CD4-positive, alpha-beta T cell (primary cell): ENCODE measurements at regions of chr2 and their contacts with region 1.

Region 1: DNA sequence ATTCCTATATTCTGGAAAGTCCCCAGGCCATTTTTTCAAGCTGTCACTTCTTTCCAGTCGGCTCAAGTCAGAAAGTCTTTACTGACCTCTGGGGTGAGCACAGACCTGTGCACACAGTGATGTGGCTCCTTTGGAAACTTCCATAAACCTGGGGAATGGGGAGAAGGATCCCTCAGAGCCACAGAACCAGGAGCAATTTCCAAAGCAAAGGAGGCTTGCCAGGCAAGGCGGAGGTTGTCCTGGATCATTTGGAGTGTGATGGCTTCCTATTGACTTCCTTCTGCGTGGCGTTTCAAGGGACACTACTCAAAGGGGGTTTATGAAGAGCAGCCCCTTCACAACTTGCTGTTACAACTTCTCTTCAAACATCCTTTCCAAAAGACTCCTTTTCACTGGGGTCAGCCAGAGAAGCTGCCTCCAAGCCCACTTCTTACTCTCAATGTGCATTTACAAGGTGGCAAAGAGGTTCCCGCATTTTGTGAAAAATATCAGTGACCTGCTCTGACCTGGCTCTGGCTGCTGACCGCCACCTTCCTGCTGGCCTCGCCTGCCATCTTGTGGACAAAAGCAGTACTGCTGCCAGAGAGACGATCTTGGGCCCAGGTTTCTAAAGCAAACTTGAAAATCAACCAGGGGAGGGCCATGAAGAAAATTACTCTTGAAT is 18.2 kb upstream of the TMEM247 start:
- DNase-seq: peak; percentile 41 to 83 (median 68)
- ATAC-seq: peak; percentile 60
- H3K4me3 ChIP-seq: no peak overlapping the region
- H3K4me3 Mint-ChIP-seq: no peak overlapping the region
- H3K27ac ChIP-seq: no peak overlapping the region
- H3K27ac Mint-ChIP-seq: no peak overlapping the region
- H3K4me1 ChIP-seq: peaks cover 12% of the 10 kb centered on the region
- H3K4me1 Mint-ChIP-seq: peaks cover 10% of the 10 kb centered on the region
- H3K27me3 ChIP-seq: no peaks in the 10 kb centered on the region
- H3K27me3 Mint-ChIP-seq: peaks cover 5% of the 10 kb centered on the region
- CTCF ChIP-seq: peak; percentile 100

Region 2: DNA sequence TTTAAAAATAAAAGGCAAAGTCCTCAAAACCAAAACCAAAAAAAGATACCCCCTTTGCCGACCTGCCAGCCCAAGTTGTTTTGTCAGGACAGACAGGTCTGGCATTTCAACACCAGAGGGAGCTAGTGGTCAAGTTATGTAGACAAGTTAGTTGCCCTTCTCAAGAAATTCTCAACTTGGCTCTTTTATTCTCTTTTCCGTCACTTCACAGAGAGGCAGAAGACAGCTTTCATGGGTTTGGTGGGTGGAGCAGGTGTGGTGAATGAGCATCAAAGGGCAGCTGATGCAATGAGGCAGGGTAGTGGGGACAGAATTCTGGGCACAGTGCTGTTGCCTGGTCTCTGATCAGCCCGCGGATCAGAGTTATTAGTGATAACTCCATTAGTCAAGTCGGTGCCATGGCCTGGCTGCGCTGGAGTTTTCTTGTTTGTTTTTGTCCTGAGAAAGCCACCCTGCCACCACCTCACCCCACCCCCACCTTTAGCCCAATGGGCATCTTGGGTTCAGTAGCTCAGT is 467.6 kb before region 1 on chr2:
- CTCF ChIA-PET with region 1: interaction called, 6 read pairs
- POLR2A ChIA-PET with region 1: interaction called, 3 read pairs
- intact Hi-C with region 1: loop called (anchors 1 kb)
- DNase-seq: peak in 13 of 14 experiments; percentile 8 to 80 (median 42)
- ATAC-seq: peak; percentile 68
- H3K4me3 ChIP-seq: no peak overlapping the region
- H3K4me3 Mint-ChIP-seq: no peak overlapping the region
- H3K27ac ChIP-seq: no peak overlapping the region
- H3K27ac Mint-ChIP-seq: no peak overlapping the region
- H3K4me1 ChIP-seq: no peaks in the 10 kb centered on the region
- H3K4me1 Mint-ChIP-seq: peaks cover 6% of the 10 kb centered on the region
- H3K27me3 ChIP-seq: no peaks in the 10 kb centered on the region
- H3K27me3 Mint-ChIP-seq: no peaks in the 10 kb centered on the region
- CTCF ChIP-seq: peak; percentile 80

Region 3: DNA sequence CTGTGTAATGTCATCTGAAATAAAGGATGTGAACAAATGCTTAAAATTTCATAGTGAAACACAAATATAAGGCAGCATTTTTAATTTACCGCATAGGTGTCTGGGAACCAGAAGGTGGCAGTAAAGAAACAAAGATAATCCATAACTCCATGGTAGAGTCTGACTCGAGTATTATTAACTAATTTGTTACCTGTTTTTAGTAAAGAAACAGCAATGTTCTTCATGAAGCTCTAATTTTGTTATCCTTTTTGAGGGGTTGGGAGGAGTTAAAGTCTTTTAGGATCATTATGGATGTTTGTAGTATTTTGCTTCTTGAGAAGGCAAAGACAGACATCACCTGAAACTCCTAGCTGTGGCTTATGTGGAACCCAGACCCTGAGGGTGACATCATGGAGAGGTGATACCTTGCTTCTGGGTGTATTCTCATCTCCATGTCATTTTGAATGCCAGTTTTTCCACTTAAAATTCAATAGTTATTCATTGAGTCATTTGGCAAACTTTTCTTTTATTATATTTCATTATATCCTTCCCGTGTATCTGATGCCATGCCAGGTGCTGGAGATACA is 450.1 kb before region 1 on chr2:
- CTCF ChIA-PET with region 1: no interaction called
- POLR2A ChIA-PET with region 1: no interaction called
- intact Hi-C with region 1: loop called (anchors 1 kb)
- DNase-seq: peak in 3 of 14 experiments; percentile 36 to 45 (median 36)
- ATAC-seq: no peak
- H3K4me3 ChIP-seq: no peak overlapping the region
- H3K4me3 Mint-ChIP-seq: no peak overlapping the region
- H3K27ac ChIP-seq: no peak overlapping the region
- H3K27ac Mint-ChIP-seq: no peak overlapping the region
- H3K4me1 ChIP-seq: no peaks in the 10 kb centered on the region
- H3K4me1 Mint-ChIP-seq: peaks cover 4% of the 10 kb centered on the region
- H3K27me3 ChIP-seq: no peaks in the 10 kb centered on the region
- H3K27me3 Mint-ChIP-seq: no peaks in the 10 kb centered on the region
- CTCF ChIP-seq: peak; percentile 57

Region 4: DNA sequence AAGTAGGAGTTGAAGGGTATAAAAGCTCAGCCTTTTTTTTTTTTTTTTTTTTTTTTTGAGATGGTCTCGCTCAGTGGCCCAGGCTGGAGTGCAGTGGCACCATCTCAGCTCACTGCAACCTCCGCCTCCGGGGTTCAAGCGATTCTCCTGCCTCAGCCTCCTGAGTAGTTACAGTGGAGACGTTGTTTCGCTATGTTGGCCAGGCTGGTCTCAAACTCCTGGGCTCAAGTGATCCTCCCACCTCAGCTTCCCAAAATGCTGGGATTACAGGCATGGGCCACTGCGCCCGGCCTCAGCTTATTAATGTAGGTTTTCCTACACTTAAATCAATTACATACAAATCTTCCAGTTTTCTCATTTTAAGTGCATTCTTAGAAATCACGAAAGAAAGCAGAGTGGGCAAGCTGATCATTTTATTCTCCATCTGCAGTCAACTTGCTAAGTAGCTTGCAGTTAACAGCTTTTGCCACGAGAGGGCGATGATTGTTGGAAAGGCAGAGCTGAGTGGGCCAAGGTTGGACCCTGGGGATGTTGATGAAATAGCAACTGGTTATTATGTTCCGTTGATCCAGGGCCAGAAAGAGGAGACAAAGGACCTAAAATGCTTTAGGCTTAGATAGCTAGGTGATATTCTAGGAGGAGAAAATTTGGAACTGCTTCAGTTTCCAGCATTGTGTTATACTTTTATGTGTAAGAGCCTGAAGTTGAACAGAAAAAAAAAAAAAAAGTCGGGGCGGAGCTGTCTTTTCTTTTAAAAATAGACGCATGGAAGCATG is 398.3 kb before region 1 on chr2:
- CTCF ChIA-PET with region 1: interaction called, 3 read pairs
- POLR2A ChIA-PET with region 1: no interaction called
- intact Hi-C with region 1: loop called (anchors 1 kb)
- DNase-seq: peak; percentile 41 to 74 (median 57)
- ATAC-seq: peak; percentile 52
- H3K4me3 ChIP-seq: no peak overlapping the region
- H3K4me3 Mint-ChIP-seq: no peak overlapping the region
- H3K27ac ChIP-seq: no peak overlapping the region
- H3K27ac Mint-ChIP-seq: no peak overlapping the region
- H3K4me1 ChIP-seq: no peaks in the 10 kb centered on the region
- H3K4me1 Mint-ChIP-seq: no peaks in the 10 kb centered on the region
- H3K27me3 ChIP-seq: no peaks in the 10 kb centered on the region
- H3K27me3 Mint-ChIP-seq: no peaks in the 10 kb centered on the region
- CTCF ChIP-seq: peak; percentile 88

Region 5: GRCh38 chr2:46335391-46336282 is 125.5 kb before region 1 on chr2:
- CTCF ChIA-PET with region 1: no interaction called
- POLR2A ChIA-PET with region 1: no interaction called
- intact Hi-C with region 1: loop called in 1 of 2 experiments (anchors 2 kb)
- DNase-seq: no peak
- ATAC-seq: no peak
- H3K4me3 ChIP-seq: no peak overlapping the region
- H3K4me3 Mint-ChIP-seq: no peak overlapping the region
- H3K27ac ChIP-seq: no peak overlapping the region
- H3K27ac Mint-ChIP-seq: no peak overlapping the region
- H3K4me1 ChIP-seq: peaks cover 13% of the 10 kb centered on the region
- H3K4me1 Mint-ChIP-seq: peaks cover 27% of the 10 kb centered on the region
- H3K27me3 ChIP-seq: no peaks in the 10 kb centered on the region
- H3K27me3 Mint-ChIP-seq: no peaks in the 10 kb centered on the region
- CTCF ChIP-seq: no peak

Region 6: DNA sequence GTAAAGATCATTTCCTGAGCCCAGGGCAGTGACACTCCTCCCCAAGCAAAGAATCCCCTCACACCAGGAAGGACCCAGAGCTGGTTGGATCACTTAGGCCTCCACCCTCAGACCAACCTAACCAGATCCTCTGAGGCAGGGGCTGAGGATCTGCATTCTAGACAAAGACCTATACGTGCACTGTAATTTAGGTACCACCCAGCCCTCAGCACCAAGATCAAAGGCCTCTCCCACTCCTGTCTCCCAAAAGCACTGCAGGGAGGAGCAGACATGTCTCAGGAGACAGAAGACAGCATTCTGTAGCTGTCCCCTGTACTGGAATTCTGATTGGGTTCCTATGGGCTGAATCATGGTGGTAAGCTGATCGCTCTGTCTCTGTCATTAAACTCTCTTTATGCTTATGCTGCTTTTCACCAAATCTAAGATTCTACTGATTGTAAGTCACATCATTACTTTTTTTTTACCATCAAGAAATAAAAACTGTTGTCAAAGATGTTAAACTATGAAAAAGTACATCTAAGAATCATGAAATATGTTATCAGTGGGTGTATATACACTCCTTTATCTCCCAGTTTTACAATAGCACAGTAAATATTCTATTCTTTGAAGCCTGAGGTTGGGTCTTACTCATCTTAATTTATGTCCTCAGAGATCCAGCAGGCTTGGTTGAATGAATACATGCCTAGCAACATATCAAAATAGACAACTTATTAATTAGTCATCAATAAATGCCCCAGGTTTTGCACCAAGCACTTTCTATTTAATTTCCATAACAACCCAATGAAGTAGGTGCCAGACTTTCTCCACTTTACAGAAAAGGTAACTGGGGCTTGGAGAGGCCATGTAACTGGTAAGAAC is 426.1 kb after region 1 on chr2:
- CTCF ChIA-PET with region 1: no interaction called
- POLR2A ChIA-PET with region 1: no interaction called
- intact Hi-C with region 1: loop called in 1 of 2 experiments (anchors 2 kb)
- DNase-seq: no peak
- ATAC-seq: no peak
- H3K4me3 ChIP-seq: no peak overlapping the region
- H3K4me3 Mint-ChIP-seq: no peak overlapping the region
- H3K27ac ChIP-seq: no peak overlapping the region
- H3K27ac Mint-ChIP-seq: no peak overlapping the region
- H3K4me1 ChIP-seq: no peaks in the 10 kb centered on the region
- H3K4me1 Mint-ChIP-seq: no peaks in the 10 kb centered on the region
- H3K27me3 ChIP-seq: peaks cover 0 to 3% of the 10 kb centered on the region in 2 experiments
- H3K27me3 Mint-ChIP-seq: peaks cover 5% of the 10 kb centered on the region
- CTCF ChIP-seq: no peak